Breast epithelium (tissue), 4 donors: ENCODE measurements at regions of chr3 and their contacts with region 1.

Region 1: GRCh38 chr3:194198938-194199337 is 63.0 kb downstream of the HES1 start:
- DNase-seq: no peak
- H3K4me3 ChIP-seq: no peak overlapping the region
- H3K27ac ChIP-seq: no peak overlapping the region
- H3K4me1 ChIP-seq: no peaks in the 10 kb centered on the region
- H3K27me3 ChIP-seq: no peaks in the 10 kb centered on the region
- CTCF ChIP-seq: no peak
- POLR2A ChIP-seq: no peak

Region 2: DNA sequence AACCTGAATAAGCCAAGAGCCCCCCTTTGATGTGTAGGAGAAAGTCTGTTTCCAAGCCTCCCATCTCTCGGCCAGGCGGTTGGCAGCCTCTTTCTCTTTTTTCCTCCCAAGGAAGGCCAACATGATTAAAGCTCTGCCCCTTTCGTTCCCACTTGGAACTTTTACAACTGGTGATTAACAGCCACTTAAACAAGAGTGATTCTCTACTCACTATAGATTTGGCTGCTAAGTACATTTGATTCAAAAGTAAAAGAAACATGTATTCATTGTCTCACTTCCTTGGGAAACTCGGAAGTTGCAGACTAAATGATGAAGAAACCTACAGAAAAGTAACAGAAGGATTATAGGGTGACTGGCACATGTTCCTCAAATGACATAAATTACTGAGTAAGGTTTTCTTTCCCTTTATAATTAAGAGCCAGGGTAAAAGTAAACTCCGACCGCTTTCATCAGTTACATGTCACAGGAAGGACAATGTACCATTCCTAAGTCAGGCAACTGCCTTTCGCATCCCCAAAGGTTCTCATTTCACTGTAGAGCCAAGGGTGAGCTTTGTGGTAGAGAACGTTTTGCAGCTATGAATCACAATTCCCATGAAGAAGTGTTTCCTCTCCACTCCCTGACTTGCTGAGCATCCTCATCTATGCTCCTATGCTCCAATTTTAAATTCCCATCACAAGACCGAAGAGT is 1354.0 kb before region 1 on chr3:
- intact Hi-C with region 1: loop called (anchors 5 kb)
- DNase-seq: no peak
- H3K4me3 ChIP-seq: no peak overlapping the region
- H3K27ac ChIP-seq: no peak overlapping the region
- H3K4me1 ChIP-seq: no peaks in the 10 kb centered on the region
- H3K27me3 ChIP-seq: no peaks in the 10 kb centered on the region
- CTCF ChIP-seq: no peak
- POLR2A ChIP-seq: no peak

Region 3: DNA sequence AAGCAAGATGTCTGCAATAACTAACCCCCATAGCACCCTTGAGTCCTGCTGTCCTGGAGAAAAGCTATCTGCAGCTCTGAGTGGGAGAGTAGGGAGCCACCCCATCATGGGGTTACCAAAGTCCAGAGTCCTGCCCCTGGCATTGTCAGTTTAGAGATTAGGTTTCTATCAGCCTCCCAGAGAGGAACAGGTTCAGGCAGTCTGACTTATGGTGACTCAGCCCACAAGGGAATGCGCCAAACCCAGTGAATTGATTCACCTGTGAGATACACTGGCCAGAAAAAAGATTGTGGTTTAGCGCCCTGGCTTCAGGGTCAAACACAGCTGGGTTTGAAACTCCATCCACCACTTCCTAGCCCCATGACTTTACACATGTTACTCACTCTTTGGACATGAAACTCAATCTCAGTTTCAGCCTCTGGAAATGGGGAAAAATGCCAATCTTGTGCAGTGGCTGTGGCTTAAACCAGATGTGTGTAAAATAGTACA is 326.6 kb before region 1 on chr3:
- intact Hi-C with region 1: no loop called
- DNase-seq: peak; percentile 61 to 71
- H3K4me3 ChIP-seq: no peak overlapping the region
- H3K27ac ChIP-seq: peak overlapping the region; percentile 9 to 64
- H3K4me1 ChIP-seq: no peaks in the 10 kb centered on the region
- H3K27me3 ChIP-seq: peaks cover 0 to 5% of the 10 kb centered on the region in 2 donors
- CTCF ChIP-seq: no peak
- POLR2A ChIP-seq: no peak